T-cell (primary cell): ENCODE measurements at regions of chr12 and their contacts with region 1.

Region 1: GRCh38 chr12:14417715-14418114 is 52.2 kb downstream of the ATF7IP start:
- DNase-seq: peak; percentile 19 to 87 (median 75)
- ATAC-seq: peak; percentile 78 to 87 (median 81)
- H3K4me3 ChIP-seq: no peak overlapping the region
- H3K4me3 Mint-ChIP-seq: peak overlapping the region; percentile 68 to 74 (median 71)
- H3K27ac ChIP-seq: peak overlapping the region; percentile 77
- H3K27ac Mint-ChIP-seq: peak overlapping the region; percentile 85 to 90
- H3K4me1 ChIP-seq: peaks cover 17 to 22% of the 10 kb centered on the region in 2 experiments
- H3K4me1 Mint-ChIP-seq: peaks cover 66 to 70% (median 67%) of the 10 kb centered on the region in 3 donors
- H3K27me3 ChIP-seq: no peaks in the 10 kb centered on the region
- H3K27me3 Mint-ChIP-seq: no peaks in the 10 kb centered on the region

Region 2: GRCh38 chr12:14257734-14258574 is 159.8 kb before region 1 on chr12:
- CTCF ChIA-PET with region 1: interaction called, 10 to 14 read pairs
- POLR2A ChIA-PET with region 1: interaction called in 1 of 2 experiments, 3 read pairs
- DNase-seq: peak in 34 of 35 experiments; percentile 52 to 86 (median 75)
- ATAC-seq: peak; percentile 48 to 67 (median 53)
- H3K4me3 ChIP-seq: peak overlapping the region in 1 of 2 donors; percentile 2
- H3K4me3 Mint-ChIP-seq: peak overlapping the region; percentile 60 to 71 (median 60)
- H3K27ac ChIP-seq: peak overlapping the region; percentile 95
- H3K27ac Mint-ChIP-seq: peak overlapping the region; percentile 98
- H3K4me1 ChIP-seq: peaks cover 13 to 43% of the 10 kb centered on the region in 2 experiments
- H3K4me1 Mint-ChIP-seq: peaks cover 57 to 58% (median 57%) of the 10 kb centered on the region in 3 donors
- H3K27me3 ChIP-seq: no peaks in the 10 kb centered on the region
- H3K27me3 Mint-ChIP-seq: no peaks in the 10 kb centered on the region

Region 3: DNA sequence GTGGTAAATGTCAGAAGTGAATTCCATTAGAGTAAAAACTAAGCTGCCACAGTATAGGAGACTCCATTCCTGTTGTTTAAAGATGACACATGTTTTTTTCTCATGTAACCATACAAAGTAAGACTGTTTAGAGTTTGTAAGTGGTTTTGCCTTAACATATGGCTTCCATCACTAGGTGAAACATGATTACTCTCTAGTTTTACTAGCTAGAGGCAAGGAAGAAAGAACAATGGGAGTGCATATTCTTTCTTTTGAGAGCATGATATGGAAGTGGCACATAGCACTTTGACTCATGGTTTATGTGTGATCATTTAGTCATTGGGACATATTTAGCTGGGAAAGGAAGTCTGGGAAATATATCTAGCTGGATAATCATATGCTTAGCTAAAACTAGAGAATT is 44.5 kb before region 1 on chr12:
- CTCF ChIA-PET with region 1: interaction called, 3 to 30 read pairs
- POLR2A ChIA-PET with region 1: interaction called, 4 to 11 read pairs
- DNase-seq: no peak
- ATAC-seq: peak in 2 of 4 experiments; percentile 40 to 46
- H3K4me3 ChIP-seq: no peak overlapping the region
- H3K4me3 Mint-ChIP-seq: peak overlapping the region; percentile 35 to 51 (median 37)
- H3K27ac ChIP-seq: peak overlapping the region; percentile 36
- H3K27ac Mint-ChIP-seq: peak overlapping the region; percentile 80 to 82
- H3K4me1 ChIP-seq: peaks cover 18 to 38% of the 10 kb centered on the region in 2 experiments
- H3K4me1 Mint-ChIP-seq: peaks cover 61 to 68% (median 67%) of the 10 kb centered on the region in 3 donors
- H3K27me3 ChIP-seq: no peaks in the 10 kb centered on the region
- H3K27me3 Mint-ChIP-seq: no peaks in the 10 kb centered on the region

Region 4: DNA sequence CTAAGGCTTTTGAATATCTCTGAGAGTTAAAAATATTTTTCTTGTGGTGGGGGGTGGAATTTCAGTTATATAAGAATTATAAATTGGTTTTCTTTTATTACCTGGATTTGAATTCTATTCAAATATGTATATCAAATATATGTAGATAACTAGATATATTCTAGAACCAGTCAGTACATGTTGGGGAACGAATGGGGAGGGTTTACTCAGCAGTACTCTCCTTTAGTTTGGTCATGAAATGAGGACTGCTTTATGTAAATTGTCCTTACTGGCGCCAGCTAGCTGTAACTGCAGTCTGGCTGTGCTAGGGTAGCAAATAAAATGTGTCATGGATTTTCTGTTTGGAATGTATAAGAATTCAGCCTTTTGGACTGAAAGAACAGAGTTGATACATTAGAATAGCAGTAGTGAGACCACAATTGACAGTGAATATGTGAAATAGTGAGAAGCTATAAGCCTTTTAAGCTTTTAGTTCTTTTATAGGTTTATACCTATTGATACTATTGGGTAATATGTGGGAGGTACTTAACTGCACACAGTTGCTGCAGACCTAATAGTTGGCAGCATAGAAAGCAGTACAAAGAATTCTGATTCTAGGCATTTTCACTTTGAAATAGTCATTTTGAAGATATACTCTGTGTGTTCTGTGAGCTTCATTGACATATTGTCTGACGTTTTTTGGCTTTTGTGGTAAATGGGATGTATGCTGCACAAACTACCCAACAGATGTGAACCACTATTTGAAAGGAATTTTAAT is 23.2 kb before region 1 on chr12:
- CTCF ChIA-PET with region 1: interaction called in 1 of 2 experiments, 31 read pairs
- POLR2A ChIA-PET with region 1: interaction called, 3 to 8 read pairs
- DNase-seq: peak in 21 of 35 experiments; percentile 13 to 81 (median 31)
- ATAC-seq: peak; percentile 65 to 81 (median 76)
- H3K4me3 ChIP-seq: peak overlapping the region in 1 of 2 donors; percentile 16
- H3K4me3 Mint-ChIP-seq: peak overlapping the region; percentile 58 to 82 (median 73)
- H3K27ac ChIP-seq: peak overlapping the region; percentile 73
- H3K27ac Mint-ChIP-seq: peak overlapping the region; percentile 92 to 96
- H3K4me1 ChIP-seq: peaks cover 32 to 47% of the 10 kb centered on the region in 2 experiments
- H3K4me1 Mint-ChIP-seq: peaks cover 86 to 91% (median 91%) of the 10 kb centered on the region in 3 donors
- H3K27me3 ChIP-seq: no peaks in the 10 kb centered on the region
- H3K27me3 Mint-ChIP-seq: no peaks in the 10 kb centered on the region

Region 5: GRCh38 chr12:14473707-14474287 is 56.1 kb after region 1 on chr12:
- CTCF ChIA-PET with region 1: interaction called in 1 of 2 experiments, 3 read pairs
- POLR2A ChIA-PET with region 1: interaction called in 1 of 2 experiments, 12 read pairs
- DNase-seq: peak in 1 of 35 experiments; percentile 20
- ATAC-seq: no peak
- H3K4me3 ChIP-seq: no peak overlapping the region
- H3K4me3 Mint-ChIP-seq: no peak overlapping the region
- H3K27ac ChIP-seq: no peak overlapping the region
- H3K27ac Mint-ChIP-seq: no peak overlapping the region
- H3K4me1 ChIP-seq: no peaks in the 10 kb centered on the region
- H3K4me1 Mint-ChIP-seq: peaks cover 0 to 7% (median 4%) of the 10 kb centered on the region in 3 donors
- H3K27me3 ChIP-seq: no peaks in the 10 kb centered on the region
- H3K27me3 Mint-ChIP-seq: no peaks in the 10 kb centered on the region

Region 6: GRCh38 chr12:15256766-15257165 is 839.1 kb after region 1 on chr12:
- CTCF ChIA-PET with region 1: no interaction called
- POLR2A ChIA-PET with region 1: interaction called in 1 of 2 experiments, 16 read pairs
- DNase-seq: no peak
- ATAC-seq: no peak
- H3K4me3 ChIP-seq: no peak overlapping the region
- H3K4me3 Mint-ChIP-seq: no peak overlapping the region
- H3K27ac ChIP-seq: no peak overlapping the region
- H3K27ac Mint-ChIP-seq: no peak overlapping the region
- H3K4me1 ChIP-seq: no peaks in the 10 kb centered on the region
- H3K4me1 Mint-ChIP-seq: no peaks in the 10 kb centered on the region
- H3K27me3 ChIP-seq: no peaks in the 10 kb centered on the region
- H3K27me3 Mint-ChIP-seq: peaks cover 18 to 35% of the 10 kb centered on the region in 2 donors